ENCODE measurements at regions of chrX and their contacts with region 1.

Region 1: GRCh38 chrX:71378732-71379131 is 12.6 kb downstream of the TAF1 start:
- DNase-seq: no peak
- H3K4me3 ChIP-seq: no peak overlapping the region
- H3K27ac ChIP-seq: no peak overlapping the region
- H3K4me1 ChIP-seq: no peaks in the 10 kb centered on the region
- CTCF ChIP-seq: no peak

Region 2: GRCh38 chrX:71565474-71566041 is 186.8 kb after region 1 on chrX:
- CTCF ChIA-PET with region 1: no interaction called
- POLR2A ChIA-PET with region 1: no interaction called
- intact Hi-C with region 1: loop called (anchors 10 kb)
- DNase-seq: no peak
- H3K4me3 ChIP-seq: no peak overlapping the region
- H3K27ac ChIP-seq: no peak overlapping the region
- H3K4me1 ChIP-seq: no peaks in the 10 kb centered on the region
- CTCF ChIP-seq: no peak

Measured in OCI-LY7 (cell line).